Calu3 (cell line): ENCODE measurements at regions of chr5 and their contacts with region 1.

Region 1: DNA sequence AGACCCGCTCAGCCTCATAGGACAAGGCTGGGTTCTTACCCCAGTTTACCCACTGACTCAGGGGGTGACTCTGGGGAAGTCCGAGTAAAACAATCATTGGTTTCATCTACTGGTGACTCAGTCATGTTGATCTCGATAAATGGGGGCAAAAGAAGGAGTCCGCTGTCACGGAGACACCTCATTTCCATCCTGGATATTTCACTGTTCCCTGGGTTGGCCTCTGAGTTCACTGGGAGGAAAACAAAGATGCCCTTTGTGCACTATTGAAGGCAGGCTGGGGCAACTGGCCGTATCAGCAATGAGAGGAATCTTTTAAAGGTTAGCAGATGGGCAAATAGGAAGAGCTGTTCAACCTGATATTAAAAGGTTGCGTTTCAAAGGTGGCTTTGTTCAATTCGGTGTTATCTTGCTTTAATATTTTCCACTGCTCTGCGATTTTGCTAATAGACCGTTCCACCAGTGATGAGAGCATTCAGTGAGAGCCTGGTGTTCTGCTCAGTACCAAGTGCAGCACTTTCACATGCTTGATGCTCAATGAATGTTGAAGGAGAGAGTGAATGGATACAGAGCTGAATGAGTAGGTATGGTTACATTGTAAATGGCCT is 110.2 kb upstream of the EGFLAM start:
- DNase-seq: peak; percentile 33
- H3K4me3 Mint-ChIP-seq: peak overlapping the region; percentile 52
- H3K27ac Mint-ChIP-seq: peak overlapping the region; percentile 74
- H3K4me1 Mint-ChIP-seq: peaks cover 42% of the 10 kb centered on the region
- H3K27me3 Mint-ChIP-seq: no peaks in the 10 kb centered on the region
- CTCF ChIP-seq: no peak

Region 2: GRCh38 chr5:38023799-38024198 is 124.3 kb before region 1 on chr5:
- CTCF ChIA-PET with region 1: no interaction called
- intact Hi-C with region 1: loop called (anchors 5 kb)
- DNase-seq: no peak
- H3K4me3 Mint-ChIP-seq: no peak overlapping the region
- H3K27ac Mint-ChIP-seq: no peak overlapping the region
- H3K4me1 Mint-ChIP-seq: peaks cover 8% of the 10 kb centered on the region
- H3K27me3 Mint-ChIP-seq: peaks cover 21% of the 10 kb centered on the region
- CTCF ChIP-seq: peak; percentile 46

Region 3: DNA sequence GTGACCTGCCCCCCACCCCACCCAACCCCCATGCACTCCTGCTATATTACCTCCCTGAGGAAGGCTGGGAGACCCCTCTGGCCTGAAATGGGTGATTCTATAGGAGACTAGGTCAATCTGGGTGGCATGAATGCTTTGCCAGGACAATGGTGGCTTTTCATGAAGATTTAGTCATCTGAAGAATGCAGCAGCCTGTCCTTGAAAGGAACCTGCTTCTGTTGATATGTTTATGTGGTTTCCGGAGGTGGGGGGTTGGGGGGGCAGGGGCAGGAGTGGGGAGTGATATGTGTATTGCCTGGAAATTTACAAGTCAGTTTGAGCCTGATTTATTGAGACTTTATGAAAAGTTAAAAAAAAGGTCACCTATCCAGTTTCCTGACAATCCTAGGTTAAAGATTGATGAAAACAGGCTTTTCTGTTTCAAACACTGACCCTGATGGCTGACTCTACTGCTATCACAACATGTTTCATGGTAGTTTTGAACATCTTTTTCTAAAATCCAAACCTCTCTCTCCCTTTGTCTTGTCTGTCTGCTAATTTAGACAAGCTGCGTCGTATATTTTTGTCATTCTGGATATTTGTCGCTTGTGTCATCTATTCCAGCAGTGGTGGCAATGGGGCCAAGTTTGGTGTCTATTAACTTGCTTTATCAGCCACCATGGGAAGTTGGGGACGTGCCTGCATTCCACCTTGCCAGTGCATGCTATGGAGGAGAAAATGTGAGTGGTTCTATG is 43.5 kb before region 1 on chr5:
- CTCF ChIA-PET with region 1: no interaction called
- intact Hi-C with region 1: loop called (anchors 2 kb)
- DNase-seq: peak; percentile 23
- H3K4me3 Mint-ChIP-seq: peak overlapping the region; percentile 61
- H3K27ac Mint-ChIP-seq: peak overlapping the region; percentile 93
- H3K4me1 Mint-ChIP-seq: peaks cover 36% of the 10 kb centered on the region
- H3K27me3 Mint-ChIP-seq: no peaks in the 10 kb centered on the region
- CTCF ChIP-seq: no peak